Calu3 (cell line): ENCODE measurements at regions of chr17 and their contacts with region 1.

Region 1: DNA sequence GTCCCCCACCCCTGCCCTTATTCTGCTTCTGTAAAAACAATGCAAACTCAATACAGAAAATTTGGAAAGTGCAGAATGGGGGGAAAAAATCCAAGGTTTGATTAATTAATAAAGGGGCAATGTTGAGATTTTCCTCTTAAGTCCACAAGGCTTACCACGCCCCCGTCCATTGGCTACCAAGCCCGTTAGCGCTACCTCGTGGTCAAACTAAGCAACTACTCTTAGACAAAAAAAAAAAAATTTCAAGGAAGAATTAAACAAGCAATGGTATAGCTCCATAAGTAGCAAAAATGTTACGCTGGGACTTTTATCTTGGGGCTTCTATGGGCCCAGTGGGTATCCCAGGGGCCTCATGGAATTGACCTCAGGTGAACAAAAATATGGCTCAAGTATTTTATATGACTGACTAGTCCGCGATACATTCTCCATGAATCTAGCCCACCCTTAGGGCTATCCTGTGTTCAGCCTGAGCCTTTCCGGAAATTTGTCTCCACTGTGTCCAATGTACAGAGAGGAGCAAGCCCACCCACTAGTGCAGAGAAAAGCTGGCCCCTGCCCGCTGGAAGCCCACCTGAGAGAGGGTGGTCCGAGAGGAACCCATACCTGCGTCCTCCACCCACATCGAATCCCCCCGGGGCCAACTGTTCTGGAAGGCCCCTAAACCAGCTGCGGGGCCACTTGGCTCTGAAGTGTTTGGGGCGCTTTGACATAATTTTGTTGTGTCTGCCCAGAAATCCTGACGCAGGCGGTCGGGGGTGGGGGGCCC is 19.1 kb upstream of the TEX2 start:
- DNase-seq: peak; percentile 51
- H3K4me3 Mint-ChIP-seq: no peak overlapping the region
- H3K27ac Mint-ChIP-seq: no peak overlapping the region
- H3K4me1 Mint-ChIP-seq: no peaks in the 10 kb centered on the region
- H3K27me3 Mint-ChIP-seq: no peaks in the 10 kb centered on the region
- CTCF ChIP-seq: no peak

Region 2: DNA sequence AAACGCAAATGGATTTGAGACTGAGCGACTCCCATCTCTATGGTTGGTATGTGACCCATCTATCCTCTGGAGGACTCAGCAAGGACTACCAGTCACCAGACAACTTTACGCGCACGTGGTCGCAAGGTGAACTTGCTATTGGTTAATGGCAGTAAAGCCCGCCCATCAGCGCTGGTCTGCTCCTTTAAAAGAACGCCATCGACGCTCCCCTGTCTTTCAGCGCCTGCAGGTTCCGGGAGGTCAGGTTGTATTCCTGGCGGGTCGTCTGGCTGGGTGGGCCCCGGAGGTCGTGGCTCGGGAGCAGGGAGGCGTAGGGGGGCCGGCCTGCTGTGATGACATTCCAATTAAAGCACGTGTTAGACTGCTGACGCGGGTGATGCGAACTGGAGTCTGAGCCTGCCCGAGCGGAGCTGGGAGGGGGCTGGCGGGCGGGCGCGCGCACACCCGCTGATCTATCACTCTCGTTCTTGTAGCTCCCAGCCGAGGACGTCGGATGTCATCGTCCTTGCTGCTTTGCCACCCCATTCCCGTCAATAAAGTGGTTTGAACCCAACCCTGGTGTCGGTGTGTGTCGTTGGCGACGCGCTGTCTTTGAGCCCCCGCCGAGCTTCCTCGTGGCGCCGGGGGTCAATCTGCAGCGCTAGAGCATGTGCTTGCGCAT is 136.3 kb before region 1 on chr17:
- CTCF ChIA-PET with region 1: interaction called, 4 read pairs
- intact Hi-C with region 1: loop called (anchors 2 kb)
- DNase-seq: peak; percentile 88
- H3K4me3 Mint-ChIP-seq: no peak overlapping the region
- H3K27ac Mint-ChIP-seq: no peak overlapping the region
- H3K4me1 Mint-ChIP-seq: no peaks in the 10 kb centered on the region
- H3K27me3 Mint-ChIP-seq: no peaks in the 10 kb centered on the region
- CTCF ChIP-seq: no peak

Region 3: GRCh38 chr17:64244165-64244564 is 38.0 kb before region 1 on chr17:
- CTCF ChIA-PET with region 1: no interaction called
- intact Hi-C with region 1: no loop called
- DNase-seq: no peak
- H3K4me3 Mint-ChIP-seq: no peak overlapping the region
- H3K27ac Mint-ChIP-seq: no peak overlapping the region
- H3K4me1 Mint-ChIP-seq: peaks cover 12% of the 10 kb centered on the region
- H3K27me3 Mint-ChIP-seq: no peaks in the 10 kb centered on the region
- CTCF ChIP-seq: no peak

Region 4: GRCh38 chr17:64466019-64466685 is 184.0 kb after region 1 on chr17:
- CTCF ChIA-PET with region 1: no interaction called
- intact Hi-C with region 1: no loop called
- DNase-seq: no peak
- H3K4me3 Mint-ChIP-seq: no peak overlapping the region
- H3K27ac Mint-ChIP-seq: no peak overlapping the region
- H3K4me1 Mint-ChIP-seq: peaks cover 15% of the 10 kb centered on the region
- H3K27me3 Mint-ChIP-seq: no peaks in the 10 kb centered on the region
- CTCF ChIP-seq: no peak